Calu3 (cell line): ENCODE measurements at regions of chr17 and their contacts with region 1.

Region 1: DNA sequence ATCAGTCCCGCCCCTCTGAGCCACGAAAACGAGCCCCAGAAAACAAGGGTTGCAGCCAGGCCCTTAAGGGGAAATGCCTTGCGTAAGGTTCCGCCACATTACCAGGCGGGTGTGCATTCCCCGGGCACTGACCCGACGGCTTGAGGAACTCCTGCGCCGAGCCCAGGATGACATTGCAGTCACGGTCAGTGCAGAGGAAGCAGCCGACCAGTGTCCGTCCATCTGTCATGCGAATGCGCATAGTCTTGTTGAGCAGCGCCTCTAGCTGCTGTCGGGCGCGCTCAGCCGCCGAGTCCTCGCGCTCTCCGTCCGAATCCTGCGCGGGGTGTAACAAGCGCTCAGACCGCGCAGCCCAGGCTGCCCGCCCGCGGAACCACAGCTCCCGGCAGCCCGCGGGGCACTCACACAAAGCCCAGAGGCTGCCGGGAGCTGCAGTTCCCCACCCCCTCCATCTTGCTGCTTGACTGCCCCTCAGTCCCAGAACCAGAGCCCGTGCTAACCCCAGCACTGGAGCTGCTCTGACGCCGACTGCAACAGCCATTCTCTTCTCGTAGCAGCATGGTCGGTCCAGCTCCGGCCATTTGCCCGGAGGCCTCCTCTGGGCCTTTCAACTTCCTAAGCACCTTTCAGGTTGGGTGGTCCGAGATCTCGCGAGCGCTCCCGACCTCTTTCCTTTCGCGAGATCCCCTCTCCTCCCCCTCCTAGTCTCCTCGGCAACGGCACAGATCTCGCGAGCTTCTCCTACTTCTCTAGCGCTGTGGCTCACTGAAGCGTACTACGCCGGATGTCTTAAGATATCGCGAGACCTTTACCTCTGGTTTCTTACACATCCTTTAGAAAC is at the start of gene NAA38:
- DNase-seq: peak; percentile 91
- H3K4me3 Mint-ChIP-seq: no peak within 1 kb of the TSS
- H3K27ac Mint-ChIP-seq: no peak within 1 kb of the TSS
- H3K4me1 Mint-ChIP-seq: no peaks in the 10 kb centered on the region
- H3K27me3 Mint-ChIP-seq: no peaks in the 10 kb centered on the region
- CTCF ChIP-seq: no peak
- total RNA-seq, gene NAA38: 36.3 and 36.6 TPM in 2 replicates

Region 2: GRCh38 chr17:7745748-7746470 is 111.2 kb before region 1 on chr17:
- CTCF ChIA-PET with region 1: interaction called, 4 read pairs
- intact Hi-C with region 1: loop called (anchors 10 kb)
- DNase-seq: peak; percentile 50
- H3K4me3 Mint-ChIP-seq: no peak overlapping the region
- H3K27ac Mint-ChIP-seq: no peak overlapping the region
- H3K4me1 Mint-ChIP-seq: no peaks in the 10 kb centered on the region
- H3K27me3 Mint-ChIP-seq: peaks cover 20% of the 10 kb centered on the region
- CTCF ChIP-seq: no peak

Region 3: GRCh38 chr17:7822126-7822525 is 35.0 kb before region 1 on chr17:
- CTCF ChIA-PET with region 1: interaction called, 5 read pairs
- intact Hi-C with region 1: loop called (anchors 1 kb)
- DNase-seq: no peak
- H3K4me3 Mint-ChIP-seq: no peak overlapping the region
- H3K27ac Mint-ChIP-seq: no peak overlapping the region
- H3K4me1 Mint-ChIP-seq: peaks cover 8% of the 10 kb centered on the region
- H3K27me3 Mint-ChIP-seq: peaks cover 80% of the 10 kb centered on the region
- CTCF ChIP-seq: no peak

Region 4: DNA sequence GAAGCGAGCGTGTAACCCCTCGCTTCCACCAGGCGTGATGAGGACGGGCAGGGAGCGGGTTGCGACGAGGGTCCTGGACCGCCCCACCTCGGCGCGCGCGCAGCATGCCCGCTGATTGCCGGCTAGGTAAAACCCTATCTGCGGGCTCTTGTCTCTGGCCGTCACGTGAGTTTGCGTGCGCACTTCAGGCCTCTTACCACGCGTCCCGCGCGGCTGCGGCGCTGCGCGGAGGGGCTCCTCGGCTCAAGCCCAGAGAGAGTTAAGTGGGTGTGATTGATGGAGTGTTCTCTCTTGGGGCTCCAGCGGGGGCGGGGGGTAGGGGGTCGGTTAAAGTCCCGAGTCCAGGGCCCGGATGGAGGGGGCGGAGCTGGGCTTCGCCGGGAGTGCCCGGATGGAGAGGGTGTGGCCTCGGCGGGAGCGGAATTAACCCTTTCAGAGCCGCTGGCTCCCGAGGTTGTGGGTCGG is 15.2 kb before region 1 on chr17:
- CTCF ChIA-PET with region 1: interaction called, 5 read pairs
- intact Hi-C with region 1: loop called (anchors 2 kb)
- DNase-seq: peak; percentile 89
- H3K4me3 Mint-ChIP-seq: peak overlapping the region; percentile 96
- H3K27ac Mint-ChIP-seq: peak overlapping the region; percentile 97
- H3K4me1 Mint-ChIP-seq: peaks cover 41% of the 10 kb centered on the region
- H3K27me3 Mint-ChIP-seq: no peaks in the 10 kb centered on the region
- CTCF ChIP-seq: no peak

Region 5: GRCh38 chr17:8057691-8058114 is 200.6 kb after region 1 on chr17:
- CTCF ChIA-PET with region 1: no interaction called
- intact Hi-C with region 1: no loop called
- DNase-seq: peak; percentile 55
- H3K4me3 Mint-ChIP-seq: no peak overlapping the region
- H3K27ac Mint-ChIP-seq: no peak overlapping the region
- H3K4me1 Mint-ChIP-seq: peaks cover 20% of the 10 kb centered on the region
- H3K27me3 Mint-ChIP-seq: peaks cover 57% of the 10 kb centered on the region
- CTCF ChIP-seq: peak; percentile 40